Mucosa of descending colon (tissue), 3 donors: ENCODE measurements at regions of chr2 and their contacts with region 1.

Region 1: GRCh38 chr2:42974721-42975717 is 182.6 kb upstream of the HAAO start:
- DNase-seq: peak; percentile 82 to 88 (median 87)
- ATAC-seq: peak; percentile 65
- H3K4me3 ChIP-seq: no peak overlapping the region
- H3K4me1 ChIP-seq: peaks cover 21% of the 10 kb centered on the region
- CTCF ChIP-seq: peak; percentile 79

Region 2: DNA sequence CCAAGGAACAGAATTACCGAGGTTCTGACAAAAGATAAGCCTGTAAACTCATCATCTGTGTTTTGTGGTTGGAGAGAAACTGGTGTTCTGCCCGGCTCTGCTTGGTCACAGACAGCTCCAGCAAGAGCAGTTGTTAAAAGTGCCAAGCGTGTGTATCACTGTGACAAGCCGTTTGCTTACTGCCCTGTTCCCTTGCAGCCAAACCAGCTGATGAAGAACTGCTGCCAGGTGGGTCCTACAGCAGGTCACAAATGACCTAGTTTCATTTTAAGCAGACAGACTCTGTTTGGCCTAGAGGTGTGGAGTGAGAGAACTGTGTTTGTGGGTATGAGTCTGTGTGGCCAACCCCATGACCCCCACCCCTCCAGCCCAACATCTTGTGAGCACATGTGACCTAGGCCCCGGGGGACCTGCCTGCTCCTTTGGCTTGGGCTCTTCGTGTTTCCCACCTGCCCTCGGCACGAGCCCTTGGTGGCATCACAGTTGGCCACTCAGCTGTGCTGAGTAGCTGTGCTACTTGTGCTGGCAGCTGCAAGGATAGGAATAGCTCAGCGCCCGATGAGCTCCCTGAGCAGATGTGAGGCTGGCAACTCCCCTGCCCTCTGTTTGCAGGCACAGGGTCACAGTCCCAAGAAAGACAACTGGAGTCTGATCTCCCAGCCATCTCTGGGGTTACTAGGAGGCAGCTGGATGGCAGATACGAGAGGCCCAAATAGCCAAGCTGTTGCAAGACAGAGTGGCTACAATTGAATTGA is 220.8 kb before region 1 on chr2:
- intact Hi-C with region 1: no loop called
- DNase-seq: peak in 1 of 3 donors; percentile 57
- ATAC-seq: peak; percentile 46
- H3K4me3 ChIP-seq: no peak overlapping the region
- H3K4me1 ChIP-seq: no peaks in the 10 kb centered on the region
- CTCF ChIP-seq: no peak

Region 3: GRCh38 chr2:43131024-43131889 is 156.2 kb after region 1 on chr2:
- intact Hi-C with region 1: loop called in 1 of 2 experiments (anchors 1 kb)
- DNase-seq: peak; percentile 85 to 96 (median 91)
- ATAC-seq: peak; percentile 72
- H3K4me3 ChIP-seq: no peak overlapping the region
- H3K4me1 ChIP-seq: peaks cover 54% of the 10 kb centered on the region
- CTCF ChIP-seq: peak; percentile 27

Region 4: DNA sequence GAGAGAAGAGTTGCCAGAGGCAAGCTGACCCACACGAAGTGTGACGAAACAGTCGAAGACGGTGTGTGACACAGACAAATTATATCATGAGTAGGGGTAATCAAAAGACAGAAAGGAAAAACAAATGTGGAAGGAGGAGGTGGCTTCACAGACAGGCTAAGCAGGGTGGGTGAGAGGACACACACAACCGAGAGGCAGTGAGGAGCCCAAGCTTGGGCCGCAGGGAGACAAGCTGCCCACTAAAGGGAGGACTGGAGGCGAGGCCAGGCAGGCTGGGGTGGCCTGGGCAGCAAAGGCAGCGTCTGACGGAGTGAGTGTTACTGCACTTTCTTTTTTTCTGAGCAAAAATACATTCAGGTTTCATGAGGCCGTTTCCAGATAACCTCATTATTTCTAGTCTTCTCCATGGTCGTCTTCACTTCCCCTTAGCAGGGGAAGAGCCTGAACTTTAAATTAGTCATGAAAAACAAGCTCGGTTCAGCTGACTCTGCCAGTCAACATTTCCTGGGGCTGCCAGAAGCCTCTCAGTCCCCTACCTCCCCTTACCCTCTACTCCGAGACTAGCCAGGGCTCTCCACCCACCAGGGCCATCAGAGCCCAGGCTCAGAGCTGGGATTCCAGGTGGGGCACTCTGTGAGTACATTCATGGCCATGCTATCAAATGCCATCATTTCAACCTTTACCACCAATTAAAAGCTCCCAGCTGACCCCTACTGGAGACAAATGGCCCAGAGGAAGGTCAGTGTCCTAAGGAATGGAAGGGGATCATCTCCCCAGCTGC is 265.2 kb after region 1 on chr2:
- intact Hi-C with region 1: loop called in 1 of 2 experiments (anchors 10 kb)
- DNase-seq: no peak
- ATAC-seq: peak; percentile 45
- H3K4me3 ChIP-seq: no peak overlapping the region
- H3K4me1 ChIP-seq: no peaks in the 10 kb centered on the region
- CTCF ChIP-seq: no peak